Activated CD4-positive, alpha-beta T cell treated with anti-CD3 and anti-CD28 coated beads, Interleukin-2, amount 10 ng/mL, durations not matched to agents 24 days and 14 days (primary cell): ENCODE measurements at regions of chr14 and their contacts with region 1.

Region 1: DNA sequence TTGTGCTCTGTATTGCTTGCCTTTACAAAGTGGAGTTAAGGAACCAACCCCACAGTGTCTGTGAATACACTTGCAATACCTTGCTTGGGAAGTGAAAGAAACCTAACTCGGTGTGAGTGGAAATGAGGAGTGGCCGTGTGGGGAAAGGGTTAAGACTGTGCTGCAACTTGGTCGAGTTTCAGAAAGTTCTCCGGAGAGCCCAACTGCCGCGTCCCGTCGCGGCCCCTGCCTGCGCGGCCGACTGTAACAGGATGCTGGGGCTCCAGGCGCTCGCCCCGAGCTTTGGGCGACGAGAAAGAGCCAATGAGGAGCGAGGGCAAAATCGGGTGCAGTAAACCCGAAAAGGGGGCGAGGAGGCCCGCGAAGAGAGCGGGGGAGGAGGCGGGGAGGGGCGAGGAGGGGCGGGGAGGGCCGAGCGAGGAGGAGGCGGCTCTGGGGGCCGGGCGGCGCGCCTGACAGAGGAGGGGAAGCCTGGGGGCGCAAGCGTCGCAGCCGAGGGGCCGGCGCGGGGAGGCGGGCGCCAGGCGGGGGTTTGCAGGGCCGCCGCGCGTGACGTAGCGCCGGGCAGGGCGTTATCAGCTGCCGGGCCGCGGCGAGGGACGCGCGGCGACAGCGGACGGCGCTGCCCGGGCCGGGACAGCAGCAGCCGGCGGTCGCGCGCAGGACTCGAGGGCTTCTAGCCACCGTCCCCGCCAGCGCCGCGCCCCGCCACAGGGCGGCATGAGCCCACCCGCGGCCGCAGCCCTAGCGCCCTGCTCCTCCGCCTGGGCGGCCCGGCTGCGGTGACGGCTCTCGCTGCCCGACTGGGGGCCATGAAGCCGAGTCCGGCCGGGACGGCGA is at the start of gene DACT1:
- DNase-seq: peak; percentile 89
- H3K4me3 Mint-ChIP-seq: peak within 1 kb of the TSS; percentile 87
- H3K27ac Mint-ChIP-seq: peak within 1 kb of the TSS; percentile 88
- H3K4me1 Mint-ChIP-seq: peaks cover 43% of the 10 kb centered on the region
- H3K27me3 Mint-ChIP-seq: peaks cover 34% of the 10 kb centered on the region
- total RNA-seq, gene DACT1: 3.3 and 3.8 TPM in 2 replicates

Region 2: DNA sequence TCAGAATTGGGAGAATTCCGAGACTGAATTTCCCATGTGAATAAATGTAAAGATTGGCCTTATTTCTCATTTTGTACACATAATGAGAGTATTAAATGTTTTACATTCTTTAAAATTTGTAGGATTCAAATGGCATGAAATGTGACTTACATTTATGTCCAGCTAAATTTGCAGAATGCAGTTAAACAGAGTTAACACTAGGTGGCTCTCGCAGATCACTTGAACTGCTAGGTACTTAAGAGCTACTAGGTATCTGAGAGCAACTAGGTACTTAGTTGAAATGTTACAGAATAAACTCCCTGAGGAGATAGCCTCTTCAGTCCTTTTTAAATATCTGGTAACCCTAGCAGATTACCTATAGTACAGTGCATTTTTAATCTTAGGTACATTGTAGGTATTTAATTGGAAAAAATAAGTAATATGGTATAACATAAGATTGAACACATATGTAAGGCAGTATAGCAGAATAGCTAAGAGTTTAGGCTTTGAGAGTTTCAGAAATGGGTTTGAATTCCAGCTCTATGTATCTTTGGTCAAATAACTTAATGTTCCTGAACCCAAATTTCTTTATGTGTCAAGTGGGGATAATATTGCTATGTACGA is 136.3 kb before region 1 on chr14:
- intact Hi-C with region 1: loop called (anchors 1 kb)
- DNase-seq: peak; percentile 79
- H3K4me3 Mint-ChIP-seq: no peak overlapping the region
- H3K27ac Mint-ChIP-seq: no peak overlapping the region
- H3K4me1 Mint-ChIP-seq: no peaks in the 10 kb centered on the region
- H3K27me3 Mint-ChIP-seq: no peaks in the 10 kb centered on the region

Region 3: DNA sequence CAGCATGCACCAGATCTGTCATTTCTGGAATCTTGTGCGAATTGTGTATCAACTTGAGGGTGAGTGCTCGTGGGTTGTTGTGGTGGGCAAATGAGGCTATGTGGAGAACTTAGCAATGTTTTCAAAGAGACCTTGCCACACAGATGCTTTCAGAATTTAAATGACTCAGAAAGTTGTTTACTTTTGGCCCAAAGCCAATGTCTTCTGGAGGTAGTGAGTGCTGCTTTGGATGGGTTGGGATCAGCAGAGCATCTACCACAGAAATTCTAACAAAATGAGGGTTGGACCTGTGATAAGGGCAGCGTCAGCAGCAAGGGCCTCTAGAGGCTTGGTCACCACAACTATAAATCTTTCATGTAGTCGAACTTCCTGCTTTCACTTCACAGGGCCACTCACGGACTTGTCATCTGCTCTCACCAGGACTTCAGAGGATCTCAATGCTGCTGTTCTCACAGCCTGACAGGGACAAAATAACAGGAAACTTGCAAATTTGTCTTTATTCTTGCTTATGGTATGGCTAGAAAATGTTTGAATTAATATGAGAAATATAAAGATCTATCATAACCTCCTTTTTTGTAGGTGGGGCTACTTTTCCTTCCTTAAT is 111.6 kb after region 1 on chr14:
- intact Hi-C with region 1: loop called (anchors 1 kb)
- DNase-seq: peak; percentile 75
- H3K4me3 Mint-ChIP-seq: no peak overlapping the region
- H3K27ac Mint-ChIP-seq: peak overlapping the region; percentile 25
- H3K4me1 Mint-ChIP-seq: peaks cover 10% of the 10 kb centered on the region
- H3K27me3 Mint-ChIP-seq: peaks cover 4% of the 10 kb centered on the region

Region 4: DNA sequence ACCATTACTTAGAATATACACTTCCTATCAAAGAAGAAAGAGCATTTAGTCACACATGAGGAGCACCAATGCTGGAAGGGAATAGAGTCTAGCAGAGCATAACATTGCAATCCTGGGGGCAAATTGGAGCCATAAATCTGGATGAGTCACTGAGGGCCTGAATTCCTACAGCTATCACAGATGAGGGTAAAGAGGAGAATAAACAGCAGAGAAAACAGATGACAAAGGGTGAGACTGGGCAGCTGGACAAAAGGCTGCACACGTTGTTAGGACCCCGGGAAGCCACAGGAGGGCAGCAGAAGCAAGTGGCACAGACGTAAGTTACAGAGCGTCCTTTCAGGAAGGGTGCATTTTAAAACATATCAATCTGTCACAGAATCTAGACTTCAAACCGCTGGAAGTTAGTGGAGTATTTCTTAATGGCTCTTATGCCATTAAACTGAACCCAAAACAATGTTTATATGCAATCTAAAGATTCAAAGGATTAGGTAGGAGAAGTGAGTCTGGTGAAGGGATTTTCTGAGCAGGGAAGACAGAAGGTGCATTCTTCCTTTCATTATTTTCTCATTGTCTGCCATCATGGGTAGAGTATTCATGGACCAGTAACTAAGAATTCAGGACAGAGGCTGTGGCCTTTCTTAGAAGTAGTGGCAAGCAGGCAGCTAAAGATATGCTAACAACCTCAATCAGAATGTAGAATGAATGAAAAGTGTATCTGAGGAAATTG is 391.0 kb after region 1 on chr14:
- intact Hi-C with region 1: loop called (anchors 10 kb)
- DNase-seq: peak; percentile 76
- H3K4me3 Mint-ChIP-seq: no peak overlapping the region
- H3K27ac Mint-ChIP-seq: no peak overlapping the region
- H3K4me1 Mint-ChIP-seq: peaks cover 2% of the 10 kb centered on the region
- H3K27me3 Mint-ChIP-seq: peaks cover 13% of the 10 kb centered on the region

Region 5: DNA sequence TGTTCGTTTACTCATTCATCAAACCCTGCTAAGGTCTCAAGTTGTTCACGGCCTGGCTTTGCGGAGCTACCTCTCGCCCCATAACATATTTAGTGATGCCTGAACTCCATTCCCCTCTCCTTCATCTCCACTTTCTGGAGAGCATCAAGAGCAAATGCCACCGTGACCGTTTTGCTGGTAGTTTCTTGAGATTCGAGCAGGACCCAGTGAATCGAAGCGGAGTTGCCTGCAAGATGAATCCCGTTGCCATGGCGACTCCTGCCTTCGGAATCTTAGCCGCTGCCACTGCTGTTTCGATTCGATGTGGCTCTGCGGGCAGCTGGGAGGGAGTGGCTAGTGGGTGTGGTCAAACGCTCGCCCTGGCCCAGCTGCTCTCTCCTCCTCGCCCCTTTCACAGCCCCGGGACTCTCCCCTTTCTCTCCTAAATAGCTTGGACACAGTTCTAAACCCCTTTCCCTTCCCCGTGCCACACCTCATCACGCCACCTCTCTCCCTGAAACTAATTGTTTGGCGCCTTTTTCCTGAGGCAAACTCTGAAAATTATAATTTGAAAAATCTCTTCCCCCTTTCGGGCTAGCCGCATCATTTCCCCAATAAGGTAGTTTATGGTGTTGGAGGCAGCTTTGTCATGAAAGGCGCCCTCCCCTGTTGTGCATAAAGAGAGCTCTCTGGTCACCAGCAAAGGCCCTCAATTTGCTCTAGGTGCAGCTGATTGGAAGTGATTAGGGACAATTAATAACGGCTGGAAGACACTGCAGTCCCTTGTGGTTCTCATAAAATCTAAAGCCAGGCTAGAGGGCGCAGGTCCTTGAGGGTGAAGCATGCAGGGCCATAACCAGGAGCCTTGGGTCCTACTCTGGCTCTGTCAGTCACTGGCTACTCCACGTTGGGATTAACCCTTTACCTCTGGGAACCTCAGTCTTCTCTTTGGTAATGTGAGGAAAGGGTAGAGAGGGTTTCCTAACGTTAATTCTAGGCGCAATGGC is 552.5 kb after region 1 on chr14:
- intact Hi-C with region 1: loop called (anchors 2 kb)
- DNase-seq: peak; percentile 94
- H3K4me3 Mint-ChIP-seq: peak overlapping the region; percentile 98
- H3K27ac Mint-ChIP-seq: peak overlapping the region; percentile 73
- H3K4me1 Mint-ChIP-seq: peaks cover 16% of the 10 kb centered on the region
- H3K27me3 Mint-ChIP-seq: peaks cover 19% of the 10 kb centered on the region